Naive thymus-derived CD4-positive, alpha-beta T cell (primary cell): ENCODE measurements at regions of chr4 and their contacts with region 1.

Region 1: GRCh38 chr4:3346146-3346545 is 53.3 kb downstream of the RGS12 start:
- DNase-seq: peak in 7 of 9 donors; percentile 46 to 72 (median 63)
- ATAC-seq: peak; percentile 92
- H3K4me3 ChIP-seq: no peak overlapping the region
- H3K4me3 Mint-ChIP-seq: peak overlapping the region in 1 of 10 donors; percentile 1
- H3K27ac ChIP-seq: no peak overlapping the region
- H3K27ac Mint-ChIP-seq: peak overlapping the region in 1 of 9 donors; percentile 34
- H3K4me1 ChIP-seq: peaks cover 4 to 13% of the 10 kb centered on the region in 2 donors
- H3K4me1 Mint-ChIP-seq: peaks cover 8 to 40% (median 34%) of the 10 kb centered on the region in 7 donors
- H3K27me3 ChIP-seq: no peaks in the 10 kb centered on the region
- H3K27me3 Mint-ChIP-seq: no peaks in the 10 kb centered on the region

Region 2: DNA sequence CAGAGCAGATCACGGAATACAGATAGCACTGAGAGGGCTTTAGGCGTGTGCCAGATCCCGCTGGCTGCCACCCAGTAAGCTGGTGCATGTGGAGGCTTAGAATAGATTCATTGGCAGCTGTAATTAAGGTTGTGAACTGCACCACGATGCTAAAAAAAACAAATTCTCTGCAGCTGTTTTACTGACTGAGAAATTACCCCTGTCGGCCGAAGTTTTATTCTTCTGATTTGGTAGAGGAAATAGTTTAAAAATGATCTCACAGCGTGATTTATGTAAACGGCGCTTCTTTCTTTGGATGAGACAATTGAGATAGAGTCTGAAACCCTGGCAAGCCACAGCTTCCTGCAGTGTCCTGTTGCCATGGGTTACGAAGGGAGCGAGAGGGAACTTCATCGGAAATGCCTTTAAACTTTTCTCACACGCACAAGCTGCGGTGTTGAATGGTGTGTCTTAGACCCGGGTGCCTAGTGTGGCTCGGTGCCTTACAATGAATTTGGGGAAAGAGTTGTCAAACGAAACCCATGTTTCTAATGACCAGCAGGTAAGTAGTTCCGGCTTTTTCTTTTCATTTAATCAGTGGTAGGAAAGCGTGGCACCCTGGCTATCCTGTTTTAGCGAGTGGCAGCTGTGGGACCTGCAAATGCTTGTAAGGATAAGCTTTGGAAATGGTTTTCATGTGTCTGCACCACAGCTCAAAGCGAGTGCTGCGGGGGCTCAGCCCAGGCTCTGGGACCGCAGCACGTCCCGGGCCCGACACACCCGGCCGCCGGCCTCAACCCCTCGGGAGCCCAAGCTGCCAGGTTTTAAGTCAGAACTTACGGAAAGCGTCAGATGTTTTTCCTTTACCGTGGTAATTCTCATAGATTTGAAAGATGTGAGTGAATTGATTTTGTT is 23.9 kb after region 1 on chr4:
- CTCF ChIA-PET with region 1: interaction called, 9 read pairs
- POLR2A ChIA-PET with region 1: no interaction called
- intact Hi-C with region 1: loop called in 1 of 2 experiments (anchors 2 kb)
- DNase-seq: peak in 7 of 9 donors; percentile 55 to 72 (median 65)
- ATAC-seq: peak; percentile 66
- H3K4me3 ChIP-seq: peak overlapping the region; percentile 45
- H3K4me3 Mint-ChIP-seq: peak overlapping the region; percentile 67 to 89 (median 84)
- H3K27ac ChIP-seq: peak overlapping the region; percentile 19
- H3K27ac Mint-ChIP-seq: peak overlapping the region; percentile 12 to 88 (median 63)
- H3K4me1 ChIP-seq: peaks cover 11 to 37% of the 10 kb centered on the region in 2 donors
- H3K4me1 Mint-ChIP-seq: peaks cover 12 to 54% (median 40%) of the 10 kb centered on the region in 7 donors
- H3K27me3 ChIP-seq: no peaks in the 10 kb centered on the region
- H3K27me3 Mint-ChIP-seq: peaks cover 9 to 41% (median 16%) of the 10 kb centered on the region in 5 donors

Region 3: GRCh38 chr4:3442959-3443749 is 97.0 kb after region 1 on chr4:
- CTCF ChIA-PET with region 1: interaction called, 5 read pairs
- POLR2A ChIA-PET with region 1: no interaction called
- intact Hi-C with region 1: loop called (anchors 1 kb)
- DNase-seq: peak; percentile 40 to 83 (median 69)
- ATAC-seq: peak; percentile 73
- H3K4me3 ChIP-seq: no peak overlapping the region
- H3K4me3 Mint-ChIP-seq: no peak overlapping the region
- H3K27ac ChIP-seq: no peak overlapping the region
- H3K27ac Mint-ChIP-seq: no peak overlapping the region
- H3K4me1 ChIP-seq: peaks cover 0 to 7% of the 10 kb centered on the region in 2 donors
- H3K4me1 Mint-ChIP-seq: no peaks in the 10 kb centered on the region
- H3K27me3 ChIP-seq: no peaks in the 10 kb centered on the region
- H3K27me3 Mint-ChIP-seq: no peaks in the 10 kb centered on the region

Region 4: DNA sequence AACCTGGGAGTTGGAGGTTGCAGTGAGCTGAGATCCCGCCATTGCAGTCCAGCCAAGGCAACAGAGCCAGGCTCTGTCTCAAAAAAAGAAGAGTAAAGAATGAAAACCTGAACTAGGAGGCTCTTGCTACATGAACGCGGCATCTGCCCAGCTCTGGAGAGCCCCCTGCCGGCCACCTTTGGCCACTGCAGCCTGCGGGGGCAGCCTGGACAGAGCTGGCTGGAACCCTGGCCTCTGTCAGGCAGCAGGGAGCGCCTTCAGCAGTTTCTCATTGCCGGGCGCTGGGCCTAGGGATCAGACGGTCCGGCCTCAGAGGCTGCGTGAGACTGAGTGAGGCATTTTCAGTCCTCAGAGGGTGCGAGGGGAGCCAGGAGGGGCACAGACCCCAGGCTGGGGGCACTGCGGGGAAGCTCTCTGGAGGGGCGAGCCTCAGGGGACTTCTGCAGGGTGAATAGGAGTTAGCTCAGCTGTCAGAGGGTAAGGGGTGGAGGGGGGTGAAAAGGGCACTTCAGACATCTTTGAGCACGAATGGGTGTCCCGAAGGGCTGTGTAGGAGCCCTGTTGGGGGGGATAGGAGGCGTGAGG is 134.5 kb after region 1 on chr4:
- CTCF ChIA-PET with region 1: interaction called, 5 read pairs
- POLR2A ChIA-PET with region 1: no interaction called
- intact Hi-C with region 1: loop called in 1 of 2 experiments (anchors 1 kb)
- DNase-seq: peak; percentile 39 to 84 (median 70)
- ATAC-seq: peak; percentile 80
- H3K4me3 ChIP-seq: no peak overlapping the region
- H3K4me3 Mint-ChIP-seq: no peak overlapping the region
- H3K27ac ChIP-seq: no peak overlapping the region
- H3K27ac Mint-ChIP-seq: peak overlapping the region in 1 of 9 donors; percentile 2
- H3K4me1 ChIP-seq: no peaks in the 10 kb centered on the region
- H3K4me1 Mint-ChIP-seq: peaks cover 0 to 4% (median 0%) of the 10 kb centered on the region in 7 donors
- H3K27me3 ChIP-seq: no peaks in the 10 kb centered on the region
- H3K27me3 Mint-ChIP-seq: peaks cover 3 to 27% (median 18%) of the 10 kb centered on the region in 5 donors

Region 5: GRCh38 chr4:3630468-3631287 is 284.5 kb after region 1 on chr4:
- CTCF ChIA-PET with region 1: no interaction called
- POLR2A ChIA-PET with region 1: no interaction called
- intact Hi-C with region 1: no loop called
- DNase-seq: no peak
- ATAC-seq: no peak
- H3K4me3 ChIP-seq: no peak overlapping the region
- H3K4me3 Mint-ChIP-seq: no peak overlapping the region
- H3K27ac ChIP-seq: no peak overlapping the region
- H3K27ac Mint-ChIP-seq: no peak overlapping the region
- H3K4me1 ChIP-seq: no peaks in the 10 kb centered on the region
- H3K4me1 Mint-ChIP-seq: no peaks in the 10 kb centered on the region
- H3K27me3 ChIP-seq: no peaks in the 10 kb centered on the region
- H3K27me3 Mint-ChIP-seq: peaks cover 0 to 17% (median 7%) of the 10 kb centered on the region in 5 donors